GM12878 (cell line): ENCODE measurements at regions of chr11 and their contacts with region 1.

Region 1: DNA sequence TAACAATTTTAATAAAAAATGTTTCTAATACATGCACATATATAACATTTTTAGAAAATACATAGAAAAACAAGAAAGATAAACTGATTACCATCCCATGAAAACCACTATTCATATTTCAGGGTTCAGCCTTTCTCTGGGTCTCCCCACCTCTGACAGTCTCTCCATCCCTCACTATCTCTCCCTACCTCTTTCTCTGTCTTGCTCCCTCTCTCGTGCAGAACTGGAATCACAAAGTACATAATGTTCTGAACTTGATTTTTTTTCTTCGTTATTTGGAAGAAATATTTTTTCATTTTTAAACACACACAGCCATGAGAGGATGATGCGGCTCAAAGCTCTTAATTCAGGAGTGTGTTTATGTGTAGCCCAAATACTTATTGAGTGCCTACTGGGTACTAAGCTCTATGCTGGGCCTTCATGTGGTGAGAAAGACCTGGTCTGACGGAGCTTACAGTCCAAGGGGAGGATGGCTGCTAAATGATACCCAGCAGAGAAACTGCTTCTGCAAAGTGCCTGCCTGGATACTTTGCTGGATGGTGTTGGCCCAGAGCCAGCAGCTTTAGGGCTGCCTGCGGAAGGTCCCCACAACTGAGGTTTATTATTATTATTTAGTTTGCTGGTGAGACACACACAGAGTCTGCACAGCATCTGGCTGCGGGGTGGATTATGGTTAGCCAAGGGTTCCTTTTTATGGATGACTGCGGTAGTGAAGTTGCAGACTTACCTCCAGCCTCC is 42.6 kb downstream of the SC5D start:
- DNase-seq: no peak
- ATAC-seq: no peak
- H3K4me3 ChIP-seq: no peak overlapping the region
- H3K27ac ChIP-seq: no peak overlapping the region
- H3K4me1 ChIP-seq: peaks cover 49% of the 10 kb centered on the region
- H3K27me3 ChIP-seq: no peaks in the 10 kb centered on the region
- CTCF ChIP-seq: peak in 1 of 3 experiments; percentile 9; a peak in 1 of 6 replicates
- EP300 ChIP-seq: no peak
- POLR2A ChIP-seq: no peak
- RAD21 ChIP-seq: no peak

Region 2: GRCh38 chr11:121352251-121352891 is 17.2 kb after region 1 on chr11:
- CTCF ChIA-PET with region 1: interaction called, 3 read pairs
- POLR2A ChIA-PET with region 1: interaction called, 3 read pairs
- RAD21 ChIA-PET with region 1: interaction called, 4 read pairs
- SMC1A ChIA-PET with region 1: interaction called, 11 read pairs
- in situ Hi-C with region 1: no loop called
- intact Hi-C with region 1: no loop called
- DNase-seq: no peak
- ATAC-seq: no peak
- H3K4me3 ChIP-seq: no peak overlapping the region
- H3K27ac ChIP-seq: no peak overlapping the region
- H3K4me1 ChIP-seq: peaks cover 3% of the 10 kb centered on the region
- H3K27me3 ChIP-seq: no peaks in the 10 kb centered on the region; a peak in 1 of 4 replicates
- CTCF ChIP-seq: no peak
- EP300 ChIP-seq: no peak
- POLR2A ChIP-seq: no peak
- RAD21 ChIP-seq: no peak

Region 3: GRCh38 chr11:121406291-121406690 is 71.1 kb after region 1 on chr11:
- CTCF ChIA-PET with region 1: no interaction called
- POLR2A ChIA-PET with region 1: no interaction called
- RAD21 ChIA-PET with region 1: interaction called, 5 read pairs
- SMC1A ChIA-PET with region 1: interaction called, 14 read pairs
- in situ Hi-C with region 1: no loop called
- intact Hi-C with region 1: no loop called
- DNase-seq: no peak
- ATAC-seq: peak; percentile 26; the same call in 2 of the 3 replicates
- H3K4me3 ChIP-seq: no peak overlapping the region
- H3K27ac ChIP-seq: no peak overlapping the region
- H3K4me1 ChIP-seq: peaks cover 5% of the 10 kb centered on the region; the same call in 1 of the 2 replicates
- H3K27me3 ChIP-seq: no peaks in the 10 kb centered on the region
- CTCF ChIP-seq: no peak
- EP300 ChIP-seq: no peak
- POLR2A ChIP-seq: no peak
- RAD21 ChIP-seq: no peak

Region 4: GRCh38 chr11:121426476-121427399 is 91.6 kb after region 1 on chr11:
- CTCF ChIA-PET with region 1: interaction called, 3 read pairs
- POLR2A ChIA-PET with region 1: interaction called, 6 read pairs
- RAD21 ChIA-PET with region 1: interaction called, 15 read pairs
- SMC1A ChIA-PET with region 1: interaction called, 25 read pairs
- in situ Hi-C with region 1: no loop called
- intact Hi-C with region 1: loop called (anchors 5 kb)
- DNase-seq: no peak
- ATAC-seq: peak; percentile 57
- H3K4me3 ChIP-seq: peak overlapping the region; percentile 39; the same call in 1 of the 2 replicates
- H3K27ac ChIP-seq: no peak overlapping the region
- H3K4me1 ChIP-seq: peaks cover 46% of the 10 kb centered on the region
- H3K27me3 ChIP-seq: no peaks in the 10 kb centered on the region
- CTCF ChIP-seq: peak in 2 of 3 experiments; percentile 14 to 21; a peak in 1 of 6 replicates
- EP300 ChIP-seq: no peak
- POLR2A ChIP-seq: no peak
- RAD21 ChIP-seq: no peak

Region 5: DNA sequence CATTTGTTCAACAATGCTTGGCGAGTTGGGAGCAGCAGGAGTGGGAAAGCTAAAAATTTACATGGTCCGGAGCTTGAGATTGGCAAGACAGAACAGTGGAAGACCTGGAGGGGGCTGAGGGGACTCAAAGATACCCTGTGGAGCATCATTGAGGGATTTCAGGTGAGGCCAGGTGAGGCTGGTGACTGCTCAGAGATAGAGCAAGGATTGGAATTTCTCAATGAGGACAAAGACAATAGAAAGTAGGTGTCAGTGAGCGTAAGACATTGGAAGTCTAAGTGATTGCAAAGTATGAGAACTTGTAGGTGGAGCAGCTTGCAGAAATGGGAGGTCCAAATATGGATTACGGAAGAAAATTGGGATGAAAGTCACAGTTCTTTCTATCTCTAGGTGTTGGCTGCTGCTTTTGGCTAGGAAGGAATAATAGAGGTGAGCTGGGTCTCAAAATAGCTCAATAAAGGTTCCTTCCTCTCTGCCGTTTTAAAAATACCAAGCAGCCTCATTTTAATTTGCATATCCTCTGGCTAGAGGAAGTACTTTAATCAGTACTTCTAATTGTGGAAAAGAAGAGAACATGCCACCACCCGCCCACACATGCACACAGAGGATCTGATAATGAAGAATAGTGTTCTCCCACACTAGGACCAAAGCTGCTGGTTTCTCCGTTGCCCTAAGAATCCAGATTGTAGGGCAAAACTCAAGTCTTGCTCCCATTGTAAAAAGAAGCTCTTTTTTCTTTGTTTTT is 159.4 kb after region 1 on chr11:
- CTCF ChIA-PET with region 1: no interaction called
- POLR2A ChIA-PET with region 1: interaction called, 5 read pairs
- RAD21 ChIA-PET with region 1: interaction called, 9 read pairs
- SMC1A ChIA-PET with region 1: interaction called, 10 read pairs
- in situ Hi-C with region 1: no loop called
- intact Hi-C with region 1: no loop called
- DNase-seq: peak; percentile 69
- ATAC-seq: peak; percentile 87
- H3K4me3 ChIP-seq: peak overlapping the region; percentile 24
- H3K27ac ChIP-seq: peak overlapping the region; percentile 66
- H3K4me1 ChIP-seq: peaks cover 32% of the 10 kb centered on the region
- H3K27me3 ChIP-seq: no peaks in the 10 kb centered on the region
- CTCF ChIP-seq: no peak
- EP300 ChIP-seq: no peak
- POLR2A ChIP-seq: no peak
- RAD21 ChIP-seq: no peak